ENCODE measurements at regions of chr5 and their contacts with region 1.

Region 1: DNA sequence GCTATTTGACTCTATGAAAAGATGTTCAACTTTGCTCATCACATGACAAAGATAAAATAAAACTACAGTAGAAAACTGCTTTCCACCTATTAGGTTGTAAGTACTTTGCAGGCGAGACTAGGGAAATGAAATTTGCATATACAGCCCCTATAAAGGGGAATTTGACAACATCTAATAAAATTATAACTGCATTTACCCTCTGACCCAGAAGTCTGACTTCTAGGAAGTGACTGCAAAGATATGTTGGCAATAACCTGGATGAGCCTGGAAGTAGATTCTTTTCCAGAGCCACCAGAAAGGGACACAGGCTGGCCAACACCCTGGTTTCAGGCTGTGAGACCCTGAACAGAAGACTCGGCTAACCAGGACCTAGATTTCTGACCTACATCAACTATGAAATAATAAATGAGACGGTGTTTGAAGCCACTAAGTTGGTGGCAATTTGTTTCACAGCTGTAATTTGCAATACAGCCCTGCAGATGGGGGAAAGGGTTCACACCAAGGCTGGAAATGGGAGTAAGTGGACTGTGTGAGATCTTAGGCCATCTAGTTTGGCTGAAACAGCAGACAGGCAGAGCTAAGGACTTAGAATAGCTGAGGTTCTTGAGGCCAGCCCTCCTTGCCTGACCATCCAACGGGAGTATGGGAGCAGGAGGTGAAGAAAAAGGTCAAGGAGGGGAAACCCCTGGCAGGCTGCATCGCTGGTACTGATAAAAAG is 106.6 kb downstream of the SIL1 start:
- DNase-seq: no peak
- ATAC-seq: peak; percentile 8; the same call in 1 of the 3 replicates
- H3K4me3 ChIP-seq: no peak overlapping the region
- H3K27ac ChIP-seq: no peak overlapping the region
- H3K4me1 ChIP-seq: peaks cover 36% of the 10 kb centered on the region
- H3K27me3 ChIP-seq: no peaks in the 10 kb centered on the region
- CTCF ChIP-seq: peak; percentile 16 to 51 (median 42); a peak in 4 of 6 replicates
- EP300 ChIP-seq: no peak
- POLR2A ChIP-seq: no peak
- RAD21 ChIP-seq: peak; percentile 75

Region 2: DNA sequence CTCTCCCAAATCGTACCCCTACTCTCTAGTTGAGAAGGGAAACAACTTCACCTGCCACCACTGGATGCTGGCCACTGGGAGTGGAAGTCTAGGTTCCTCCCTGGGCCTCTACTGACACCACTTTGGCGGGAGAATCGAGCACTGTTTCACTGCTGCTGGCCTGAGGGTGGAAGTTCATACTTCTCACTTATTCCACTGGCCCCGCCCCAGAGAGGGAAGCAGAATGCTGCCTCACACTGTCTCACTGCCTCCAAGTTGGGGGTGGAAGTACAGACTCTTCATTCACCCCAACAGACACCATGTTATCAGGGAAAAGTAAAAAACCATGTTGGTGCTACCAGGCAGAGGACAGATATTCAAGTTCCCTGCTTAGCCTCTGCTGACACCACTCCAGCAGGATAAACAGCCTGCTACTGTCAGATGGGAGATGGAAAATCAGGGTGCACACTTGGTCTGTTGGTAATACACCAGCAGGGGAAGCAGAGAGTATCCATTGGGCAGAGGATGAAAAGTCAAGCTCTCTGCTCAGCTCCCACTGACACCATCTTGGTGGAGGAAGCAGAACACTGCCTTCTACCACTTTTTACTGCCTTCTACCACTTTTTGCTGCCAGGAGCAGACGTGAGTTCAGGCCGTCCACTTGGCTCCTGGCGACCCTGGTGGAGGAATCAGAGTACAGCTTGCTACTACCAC is 52.8 kb before region 1 on chr5:
- CTCF ChIA-PET with region 1: no interaction called
- POLR2A ChIA-PET with region 1: no interaction called
- RAD21 ChIA-PET with region 1: no interaction called
- SMC1A ChIA-PET with region 1: no interaction called
- in situ Hi-C with region 1: no loop called
- intact Hi-C with region 1: no loop called
- DNase-seq: no peak
- ATAC-seq: 0 out of 3 replicates have a peak, but pooled peaks have one; percentile 21
- H3K4me3 ChIP-seq: no peak overlapping the region
- H3K27ac ChIP-seq: no peak overlapping the region
- H3K4me1 ChIP-seq: no peaks in the 10 kb centered on the region
- H3K27me3 ChIP-seq: no peaks in the 10 kb centered on the region
- CTCF ChIP-seq: peak in 2 of 3 experiments; percentile 3 to 12; a peak in 2 of 6 replicates
- EP300 ChIP-seq: no peak
- POLR2A ChIP-seq: no peak
- RAD21 ChIP-seq: no peak

Region 3: GRCh38 chr5:139262742-139263445 is 171.3 kb after region 1 on chr5:
- CTCF ChIA-PET with region 1: no interaction called
- POLR2A ChIA-PET with region 1: no interaction called
- RAD21 ChIA-PET with region 1: no interaction called
- SMC1A ChIA-PET with region 1: no interaction called
- in situ Hi-C with region 1: no loop called
- intact Hi-C with region 1: loop called (anchors 5 kb)
- DNase-seq: peak; percentile 40
- ATAC-seq: peak; percentile 99
- H3K4me3 ChIP-seq: no peak overlapping the region
- H3K27ac ChIP-seq: no peak overlapping the region
- H3K4me1 ChIP-seq: peaks cover 5% of the 10 kb centered on the region
- H3K27me3 ChIP-seq: no peaks in the 10 kb centered on the region; a peak in 1 of 4 replicates
- CTCF ChIP-seq: peak; percentile 83 to 93 (median 85)
- EP300 ChIP-seq: no peak
- POLR2A ChIP-seq: no peak
- RAD21 ChIP-seq: peak; percentile 99